A549 (cell line): ENCODE measurements at regions of chr11 and their contacts with region 1.

Region 1: GRCh38 chr11:18741783-18742182 is 15.8 kb upstream of the IGSF22 start:
- DNase-seq: no peak
- ATAC-seq: no peak
- H3K4me3 ChIP-seq: no peak overlapping the region
- H3K27ac ChIP-seq: no peak overlapping the region
- H3K4me1 ChIP-seq: no peaks in the 10 kb centered on the region
- CTCF ChIP-seq: peak; percentile 9; the same call in 2 of the 3 replicates
- EP300 ChIP-seq: no peak
- POLR2A ChIP-seq: no peak
- RAD21 ChIP-seq: no peak

Region 2: DNA sequence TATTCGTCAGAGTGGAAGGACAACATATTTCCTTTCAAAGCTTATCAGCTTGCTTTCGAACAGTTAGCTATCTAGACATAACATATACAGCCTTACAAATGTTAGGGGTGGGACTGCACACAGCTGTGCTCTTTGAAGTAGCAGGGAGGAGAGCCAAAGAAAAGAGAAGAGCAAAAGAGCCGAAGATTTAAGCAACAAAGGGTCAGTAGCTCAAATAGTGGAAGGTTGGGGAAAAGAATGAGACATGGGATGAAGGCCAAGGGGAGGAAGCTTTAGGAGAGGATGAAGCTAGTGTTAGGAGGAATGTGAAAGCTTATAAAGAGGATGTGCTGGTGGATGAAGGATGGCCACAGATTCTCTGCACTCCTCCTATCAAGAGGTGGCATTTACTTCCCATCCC is 16.0 kb after region 1 on chr11:
- CTCF ChIA-PET with region 1: interaction called, 35 read pairs
- POLR2A ChIA-PET with region 1: no interaction called
- DNase-seq: no peak
- ATAC-seq: no peak
- H3K4me3 ChIP-seq: no peak overlapping the region
- H3K27ac ChIP-seq: no peak overlapping the region
- H3K4me1 ChIP-seq: peaks cover 12% of the 10 kb centered on the region; the same call in 1 of the 3 replicates
- CTCF ChIP-seq: no peak
- EP300 ChIP-seq: no peak
- POLR2A ChIP-seq: no peak
- RAD21 ChIP-seq: no peak